Caki2 (cell line): ENCODE measurements at regions of chr7 and their contacts with region 1.

Region 1: GRCh38 chr7:77649716-77650349 is 46.4 kb upstream of the RSBN1L start:
- DNase-seq: no peak

Region 2: DNA sequence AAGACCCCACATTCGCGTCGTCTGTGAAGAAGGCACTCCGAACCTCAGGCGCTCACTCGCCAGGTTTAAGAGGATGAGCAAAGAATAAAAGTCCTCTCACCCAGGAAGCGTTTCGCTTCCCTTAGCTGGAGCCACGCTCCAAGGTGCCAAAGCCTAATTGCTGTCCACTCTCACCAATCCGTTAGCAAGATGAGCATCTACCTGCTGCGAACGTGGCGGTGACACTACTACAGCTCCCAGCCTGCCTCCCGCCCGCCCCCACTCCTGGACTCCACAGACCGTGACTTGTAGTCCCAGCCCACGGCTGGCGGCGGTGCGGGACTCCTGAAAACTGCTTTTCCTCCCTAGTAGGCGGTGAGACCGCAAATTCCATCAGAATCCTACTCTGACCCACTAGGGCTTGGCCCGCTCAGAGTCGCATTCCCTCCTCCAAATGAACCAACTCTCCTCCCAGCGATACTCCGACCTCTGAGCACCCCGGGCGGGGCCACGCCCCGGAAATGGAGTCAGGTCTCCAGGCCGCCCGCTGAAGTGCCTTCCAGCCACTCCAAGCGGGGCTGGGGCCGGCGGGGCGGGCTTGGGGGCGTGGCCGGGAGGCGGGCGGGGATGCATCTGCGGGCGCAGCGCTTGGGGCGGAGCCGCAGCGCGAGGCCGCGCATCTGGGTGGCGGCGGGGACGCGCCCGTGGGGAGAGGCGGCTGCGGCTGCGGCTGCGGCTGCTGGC is 113.3 kb before region 1 on chr7:
- in situ Hi-C with region 1: no loop called
- DNase-seq: peak; percentile 89

Region 3: GRCh38 chr7:77903597-77903996 is 253.8 kb after region 1 on chr7:
- in situ Hi-C with region 1: loop called (anchors 25 kb)
- DNase-seq: no peak

Region 4: GRCh38 chr7:77950548-77950947 is 300.7 kb after region 1 on chr7:
- in situ Hi-C with region 1: no loop called
- DNase-seq: no peak

Region 5: DNA sequence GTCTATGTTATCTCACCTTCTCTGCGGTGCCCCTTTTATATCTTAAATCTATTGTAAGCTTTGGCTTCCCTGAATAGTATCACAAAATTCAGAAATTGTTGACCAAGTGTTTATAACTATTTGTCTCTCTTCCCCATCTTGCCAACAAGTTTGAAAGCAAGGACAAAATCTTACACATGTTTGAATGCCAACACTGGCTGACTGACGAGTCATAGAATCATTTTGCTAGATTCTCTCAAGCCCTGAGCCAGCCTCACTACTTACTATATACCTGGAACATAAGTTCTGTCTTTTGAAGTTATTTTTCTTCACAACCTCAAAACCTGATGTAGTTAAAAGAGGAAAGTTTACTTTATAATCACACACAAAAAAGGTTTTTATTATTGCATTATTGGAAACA is 849.5 kb after region 1 on chr7:
- in situ Hi-C with region 1: no loop called
- DNase-seq: no peak